HEK293 (cell line): ENCODE measurements at regions of chr2 and their contacts with region 1.

Region 1: GRCh38 chr2:48107326-48107925 is 201.1 kb upstream of the FBXO11 start:
- H3K4me3 ChIP-seq: no peak overlapping the region
- H3K27ac ChIP-seq: no peak overlapping the region
- H3K4me1 ChIP-seq: no peaks in the 10 kb centered on the region
- CTCF ChIP-seq: no peak

Region 2: DNA sequence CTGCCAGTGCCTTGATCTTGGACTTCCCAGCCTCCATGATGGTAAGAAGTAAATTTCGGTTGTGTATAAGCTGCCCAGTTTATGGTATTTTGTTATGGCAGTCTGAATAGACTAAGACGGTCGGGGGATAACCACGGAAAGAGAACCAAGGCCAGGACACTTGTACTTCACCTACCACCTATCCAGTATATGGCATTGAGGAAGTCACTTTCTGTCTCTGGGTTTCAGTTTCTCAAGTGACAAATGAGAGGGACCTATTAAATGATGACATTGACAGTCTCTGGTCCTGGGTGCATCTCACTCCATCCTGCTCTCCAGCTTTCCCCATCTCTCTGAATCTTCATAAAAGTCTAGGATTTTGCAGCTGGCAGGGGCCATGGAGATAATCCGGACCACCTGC is 508.3 kb before region 1 on chr2:
- CTCF ChIA-PET with region 1: no interaction called
- POLR2A ChIA-PET with region 1: no interaction called
- H3K4me3 ChIP-seq: no peak overlapping the region
- H3K27ac ChIP-seq: no peak overlapping the region
- H3K4me1 ChIP-seq: no peaks in the 10 kb centered on the region
- CTCF ChIP-seq: no peak

Region 3: GRCh38 chr2:47862949-47863348 is 244.5 kb before region 1 on chr2:
- CTCF ChIA-PET with region 1: interaction called, 31 read pairs
- POLR2A ChIA-PET with region 1: no interaction called
- H3K4me3 ChIP-seq: no peak overlapping the region
- H3K27ac ChIP-seq: no peak overlapping the region
- H3K4me1 ChIP-seq: peaks cover 8% of the 10 kb centered on the region
- CTCF ChIP-seq: no peak

Region 4: DNA sequence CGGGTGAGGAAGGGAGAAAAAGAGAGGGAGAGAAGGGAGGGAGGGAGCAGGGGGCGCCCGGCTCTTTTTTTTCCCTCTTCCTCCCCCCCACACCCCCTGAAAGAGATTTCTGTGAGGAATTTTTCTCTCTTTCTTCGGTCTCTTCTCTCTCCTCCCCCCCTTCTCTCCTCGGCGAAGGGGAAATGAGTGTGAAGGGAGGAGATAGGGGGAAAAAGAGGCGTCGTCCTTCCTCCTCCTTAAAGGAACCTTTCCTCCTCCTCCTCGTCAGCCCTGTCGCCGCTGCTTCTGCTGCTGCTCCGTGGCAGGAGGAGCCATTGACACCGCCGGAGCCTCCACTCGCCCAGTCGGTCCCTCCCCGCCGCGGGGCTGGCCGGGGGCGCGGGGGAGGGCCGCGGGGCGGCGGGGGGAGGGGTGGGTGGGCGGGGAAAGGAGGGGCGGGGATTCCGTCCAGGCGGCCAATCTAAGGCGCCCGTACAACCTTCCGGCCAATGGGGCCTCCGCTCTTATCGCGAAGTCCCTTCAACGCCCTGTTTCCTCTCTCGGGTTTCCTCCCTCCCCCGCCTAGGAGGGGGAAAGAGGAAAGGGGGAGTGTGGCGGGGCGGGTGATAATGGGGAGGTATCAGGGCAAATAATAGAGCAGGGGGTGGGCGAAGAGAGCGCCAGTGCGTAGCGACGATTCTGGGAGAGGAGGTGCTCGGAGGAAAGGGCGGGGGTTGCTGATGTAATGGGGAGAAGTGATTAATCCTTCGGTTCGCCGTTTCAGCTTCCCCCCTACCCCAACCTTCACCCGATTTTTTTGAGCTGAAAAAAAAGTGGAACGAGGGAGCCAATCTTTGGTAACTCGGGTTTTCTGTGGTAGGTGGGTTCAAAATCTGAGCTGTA is 201.0 kb before region 1 on chr2 and contains the start of gene FBXO11:
- CTCF ChIA-PET with region 1: interaction called, 10 read pairs
- POLR2A ChIA-PET with region 1: no interaction called
- H3K4me3 ChIP-seq: peak within 1 kb of the TSS; percentile 84
- H3K27ac ChIP-seq: peak within 1 kb of the TSS; percentile 94
- H3K4me1 ChIP-seq: peaks cover 9% of the 10 kb centered on the region; the same call in 1 of the 2 replicates
- CTCF ChIP-seq: peak; percentile 78

Region 5: DNA sequence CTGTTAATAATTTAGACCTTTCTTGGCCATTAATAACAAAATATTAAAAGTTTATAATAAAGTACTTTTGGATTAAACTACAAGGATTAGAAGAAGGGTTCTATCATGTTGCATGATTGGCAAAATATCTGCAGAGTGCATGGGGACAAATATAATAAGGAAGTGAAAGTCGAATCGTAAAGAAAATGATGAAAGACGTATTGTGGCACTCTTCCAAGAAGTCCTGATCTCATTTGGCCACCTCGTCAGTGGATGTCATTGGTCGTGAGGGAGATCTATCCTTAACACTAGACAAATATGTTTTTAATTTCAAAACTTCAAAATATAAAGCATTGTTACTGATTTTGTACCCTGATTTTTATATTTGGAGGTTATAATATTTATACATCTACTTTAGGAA is 224.9 kb after region 1 on chr2:
- CTCF ChIA-PET with region 1: no interaction called
- POLR2A ChIA-PET with region 1: no interaction called
- H3K4me3 ChIP-seq: no peak overlapping the region
- H3K27ac ChIP-seq: no peak overlapping the region
- H3K4me1 ChIP-seq: peaks cover 24% of the 10 kb centered on the region
- CTCF ChIP-seq: no peak